Breast epithelium (tissue), 4 donors: ENCODE measurements at regions of chr1 and their contacts with region 1.

Region 1: GRCh38 chr1:116504308-116505156 is 66.3 kb downstream of the CD58 start:
- DNase-seq: peak in 1 of 2 donors; percentile 62
- H3K4me3 ChIP-seq: no peak overlapping the region
- H3K27ac ChIP-seq: peak overlapping the region; percentile 37 to 55
- H3K4me1 ChIP-seq: peaks cover 3 to 6% of the 10 kb centered on the region in 2 donors
- H3K27me3 ChIP-seq: no peaks in the 10 kb centered on the region
- CTCF ChIP-seq: no peak
- POLR2A ChIP-seq: no peak

Region 2: DNA sequence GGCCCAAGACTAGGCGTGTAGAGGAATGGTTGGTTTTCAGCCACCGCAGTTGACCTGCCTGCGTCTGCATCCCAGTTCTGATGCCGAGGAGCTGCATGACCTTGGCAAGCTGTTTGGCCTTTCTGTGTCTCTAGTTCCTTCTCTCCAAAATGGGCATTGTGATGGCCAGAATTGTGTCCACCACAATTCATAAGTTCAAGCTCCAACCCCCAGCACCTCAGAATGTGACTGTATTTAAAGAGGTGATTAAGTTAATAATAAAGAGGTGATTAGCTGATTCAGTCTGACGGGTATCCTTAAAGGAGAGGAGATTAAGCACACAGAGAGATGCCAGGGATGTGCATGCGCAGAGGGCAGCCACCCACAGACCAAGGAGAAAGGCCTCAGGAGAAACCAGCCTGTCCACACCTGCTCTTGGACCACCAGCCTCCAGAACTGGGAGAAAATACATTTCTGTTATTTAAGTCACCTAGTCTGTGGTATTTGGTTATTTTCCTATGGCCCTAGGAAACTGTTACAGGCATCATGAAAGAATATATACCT is 364.9 kb before region 1 on chr1:
- intact Hi-C with region 1: loop called (anchors 5 kb)
- DNase-seq: no peak
- H3K4me3 ChIP-seq: no peak overlapping the region
- H3K27ac ChIP-seq: no peak overlapping the region
- H3K4me1 ChIP-seq: no peaks in the 10 kb centered on the region
- H3K27me3 ChIP-seq: no peaks in the 10 kb centered on the region
- CTCF ChIP-seq: no peak
- POLR2A ChIP-seq: no peak

Region 3: DNA sequence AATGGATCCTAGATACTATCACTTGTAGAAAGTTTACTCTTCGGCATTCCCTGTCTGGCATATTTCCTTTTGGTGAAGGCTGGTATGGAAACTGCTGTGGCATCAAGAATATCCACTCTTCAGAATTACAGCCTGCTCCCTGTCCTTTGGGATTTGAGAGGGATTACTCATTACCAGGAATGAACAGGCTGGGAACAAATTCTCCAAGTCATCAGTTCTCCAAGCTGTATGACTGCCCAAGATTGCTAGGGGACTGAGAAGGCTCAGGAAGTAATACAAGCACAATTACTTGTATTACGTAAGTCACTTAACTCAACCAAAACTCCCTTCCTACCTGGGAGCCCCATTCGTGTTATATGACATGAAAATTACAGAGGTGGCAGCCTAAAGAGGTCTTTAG is 16.7 kb after region 1 on chr1:
- intact Hi-C with region 1: no loop called
- DNase-seq: no peak
- H3K4me3 ChIP-seq: no peak overlapping the region
- H3K27ac ChIP-seq: no peak overlapping the region
- H3K4me1 ChIP-seq: no peaks in the 10 kb centered on the region
- H3K27me3 ChIP-seq: no peaks in the 10 kb centered on the region
- CTCF ChIP-seq: no peak
- POLR2A ChIP-seq: no peak

Region 4: DNA sequence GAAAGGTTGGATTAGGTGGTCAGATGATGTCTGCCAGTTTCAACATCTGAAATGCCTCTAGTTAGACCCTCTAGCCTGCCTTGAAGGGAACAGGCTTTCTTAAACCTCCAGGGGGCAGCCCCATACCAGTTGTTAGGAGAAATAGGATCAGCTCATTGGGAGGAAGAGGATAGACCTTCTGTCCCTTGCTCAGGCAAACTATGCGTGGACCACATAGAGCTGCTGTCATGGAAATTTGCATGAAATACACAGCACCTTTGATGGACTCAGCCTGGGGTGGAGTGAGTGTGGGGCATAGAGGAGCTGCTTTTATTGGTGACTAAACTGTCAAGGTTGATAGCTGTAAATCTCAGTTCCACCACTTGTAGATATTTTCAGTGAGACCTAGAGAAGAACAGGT is 1718.9 kb after region 1 on chr1:
- intact Hi-C with region 1: no loop called
- DNase-seq: no peak
- H3K4me3 ChIP-seq: no peak overlapping the region
- H3K27ac ChIP-seq: no peak overlapping the region
- H3K4me1 ChIP-seq: no peaks in the 10 kb centered on the region
- H3K27me3 ChIP-seq: no peaks in the 10 kb centered on the region
- CTCF ChIP-seq: no peak
- POLR2A ChIP-seq: no peak